B cell (primary cell): ENCODE measurements at regions of chr3 and their contacts with region 1.

Region 1: GRCh38 chr3:134242649-134243617 is 7.7 kb downstream of the RYK start:
- DNase-seq: no peak
- ATAC-seq: no peak
- H3K4me3 ChIP-seq: no peak overlapping the region
- H3K4me3 Mint-ChIP-seq: no peak overlapping the region
- H3K27ac ChIP-seq: no peak overlapping the region
- H3K27ac Mint-ChIP-seq: peak overlapping the region; percentile 23
- H3K4me1 ChIP-seq: peaks cover 16 to 23% of the 10 kb centered on the region in 2 donors
- H3K4me1 Mint-ChIP-seq: peaks cover 64% of the 10 kb centered on the region
- H3K27me3 ChIP-seq: no peaks in the 10 kb centered on the region
- H3K27me3 Mint-ChIP-seq: no peaks in the 10 kb centered on the region
- CTCF ChIP-seq: no peak

Region 2: GRCh38 chr3:134222835-134223234 is 20.1 kb before region 1 on chr3:
- CTCF ChIA-PET with region 1: interaction called, 16 read pairs
- POLR2A ChIA-PET with region 1: no interaction called
- intact Hi-C with region 1: no loop called
- DNase-seq: no peak
- ATAC-seq: no peak
- H3K4me3 ChIP-seq: no peak overlapping the region
- H3K4me3 Mint-ChIP-seq: no peak overlapping the region
- H3K27ac ChIP-seq: no peak overlapping the region
- H3K27ac Mint-ChIP-seq: no peak overlapping the region
- H3K4me1 ChIP-seq: peaks cover 7% of the 10 kb centered on the region in 2 donors
- H3K4me1 Mint-ChIP-seq: peaks cover 15% of the 10 kb centered on the region
- H3K27me3 ChIP-seq: no peaks in the 10 kb centered on the region
- H3K27me3 Mint-ChIP-seq: no peaks in the 10 kb centered on the region
- CTCF ChIP-seq: no peak

Region 3: DNA sequence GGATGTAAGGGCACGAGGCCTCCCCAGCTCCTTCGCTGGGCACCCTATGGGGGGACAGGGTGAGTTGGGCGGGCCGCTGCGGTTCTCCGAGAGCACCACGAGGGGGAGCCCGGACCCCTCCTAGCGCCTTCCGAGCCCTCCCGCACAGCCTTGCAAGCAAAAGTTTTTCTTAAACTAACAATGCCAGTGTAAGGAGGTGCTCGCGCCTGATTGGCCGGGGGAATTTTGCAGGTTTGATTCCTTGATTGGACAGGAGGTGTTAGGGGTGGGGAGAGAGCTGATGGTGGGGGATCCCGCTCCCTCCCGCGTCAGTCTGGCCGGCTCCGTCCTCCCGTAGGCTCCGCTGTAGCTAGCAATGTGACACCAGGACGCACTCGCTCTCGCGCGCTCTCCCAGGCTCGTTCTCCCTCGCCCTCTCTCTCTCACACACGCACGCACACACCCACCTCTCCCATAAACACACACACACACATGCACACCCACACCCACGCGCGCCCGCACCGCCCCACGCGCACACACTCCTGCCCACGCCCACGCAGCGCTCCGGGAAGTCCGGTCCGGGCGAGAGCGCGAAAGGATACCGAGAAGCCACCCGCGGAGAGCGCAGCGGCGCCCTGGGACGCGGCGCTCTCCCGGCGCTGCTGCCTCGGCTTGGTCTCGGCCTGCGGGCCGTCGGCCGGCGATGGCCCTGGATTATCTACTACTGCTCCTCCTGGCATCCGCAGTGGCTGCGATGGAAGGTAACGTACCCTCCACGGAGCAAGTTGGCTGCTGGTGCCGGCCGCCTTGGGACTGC is 552.2 kb after region 1 on chr3 and contains the start of gene EPHB1:
- CTCF ChIA-PET with region 1: no interaction called
- POLR2A ChIA-PET with region 1: no interaction called
- intact Hi-C with region 1: no loop called
- DNase-seq: peak; percentile 80
- ATAC-seq: peak; percentile 81
- H3K4me3 ChIP-seq: peak within 1 kb of the TSS; percentile 17 to 55 (median 37)
- H3K4me3 Mint-ChIP-seq: peak within 1 kb of the TSS; percentile 97
- H3K27ac ChIP-seq: no peak within 1 kb of the TSS
- H3K27ac Mint-ChIP-seq: no peak within 1 kb of the TSS
- H3K4me1 ChIP-seq: peaks cover 14 to 16% of the 10 kb centered on the region in 2 donors
- H3K4me1 Mint-ChIP-seq: peaks cover 12% of the 10 kb centered on the region
- H3K27me3 ChIP-seq: peaks cover 0 to 44% (median 8%) of the 10 kb centered on the region in 4 experiments
- H3K27me3 Mint-ChIP-seq: peaks cover 44% of the 10 kb centered on the region
- CTCF ChIP-seq: peak; percentile 83
- total RNA-seq, gene EPHB1: 0.87 TPM in 1 of 2 replicates, not detected in the other

Region 4: DNA sequence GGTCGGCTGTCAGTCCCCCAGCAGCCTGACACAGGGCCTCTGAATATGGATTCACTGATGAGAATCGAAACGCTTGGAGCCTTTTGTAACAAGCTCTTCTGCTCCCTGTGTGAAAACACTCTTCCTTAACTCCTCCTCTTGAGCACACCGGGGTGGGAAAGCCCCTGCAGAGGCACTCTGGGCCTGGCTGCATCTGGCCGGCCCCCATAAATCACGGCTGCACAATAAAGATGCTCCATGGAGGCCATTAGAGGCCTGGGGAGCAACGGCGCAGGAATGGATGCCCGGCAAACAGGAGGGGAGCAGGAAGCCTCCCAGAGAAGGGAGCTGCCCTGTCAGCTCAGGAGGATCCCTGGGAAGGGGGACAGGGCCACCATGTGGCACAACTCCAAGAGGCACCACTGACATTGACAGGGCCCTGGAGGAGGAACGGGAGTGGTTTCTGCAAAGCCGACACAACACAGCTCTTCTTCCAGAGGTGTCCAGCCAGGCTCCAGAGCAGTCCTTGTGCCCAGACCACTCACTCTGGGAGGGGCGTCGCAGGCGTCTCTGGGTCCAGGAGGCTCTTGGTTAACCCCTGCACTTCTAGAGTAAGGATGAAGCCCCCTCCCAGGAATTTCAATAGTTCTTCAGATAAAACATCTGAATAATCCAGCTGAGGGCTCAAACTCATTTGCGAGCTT is 1213.3 kb after region 1 on chr3:
- CTCF ChIA-PET with region 1: no interaction called
- POLR2A ChIA-PET with region 1: no interaction called
- intact Hi-C with region 1: no loop called
- DNase-seq: no peak
- ATAC-seq: no peak
- H3K4me3 ChIP-seq: no peak overlapping the region
- H3K4me3 Mint-ChIP-seq: no peak overlapping the region
- H3K27ac ChIP-seq: no peak overlapping the region
- H3K27ac Mint-ChIP-seq: no peak overlapping the region
- H3K4me1 ChIP-seq: peaks cover 4 to 5% of the 10 kb centered on the region in 2 donors
- H3K4me1 Mint-ChIP-seq: peaks cover 12% of the 10 kb centered on the region
- H3K27me3 ChIP-seq: no peaks in the 10 kb centered on the region
- H3K27me3 Mint-ChIP-seq: no peaks in the 10 kb centered on the region
- CTCF ChIP-seq: no peak

Region 5: GRCh38 chr3:136142592-136142991 is 1899.7 kb after region 1 on chr3:
- CTCF ChIA-PET with region 1: no interaction called
- POLR2A ChIA-PET with region 1: no interaction called
- intact Hi-C with region 1: no loop called
- DNase-seq: no peak
- ATAC-seq: no peak
- H3K4me3 ChIP-seq: no peak overlapping the region
- H3K4me3 Mint-ChIP-seq: no peak overlapping the region
- H3K27ac ChIP-seq: no peak overlapping the region
- H3K27ac Mint-ChIP-seq: peak overlapping the region; percentile 26
- H3K4me1 ChIP-seq: no peaks in the 10 kb centered on the region
- H3K4me1 Mint-ChIP-seq: peaks cover 5% of the 10 kb centered on the region
- H3K27me3 ChIP-seq: no peaks in the 10 kb centered on the region
- H3K27me3 Mint-ChIP-seq: no peaks in the 10 kb centered on the region
- CTCF ChIP-seq: no peak